ENCODE measurements at regions of chr7 and their contacts with region 1.

Region 1: GRCh38 chr7:1123715-1124114 is 35.8 kb downstream of the GPER1 start:
- DNase-seq: peak; percentile 93 to 97 (median 96)
- ATAC-seq: peak; percentile 96 to 97
- H3K4me3 ChIP-seq: peak overlapping the region; percentile 6
- H3K27ac ChIP-seq: peak overlapping the region; percentile 37
- H3K4me1 ChIP-seq: no peaks in the 10 kb centered on the region
- H3K27me3 ChIP-seq: no peaks in the 10 kb centered on the region

Region 2: GRCh38 chr7:1086588-1087464 is 36.9 kb before region 1 on chr7:
- intact Hi-C with region 1: loop called in 1 of 4 experiments (anchors 2 kb)
- DNase-seq: peak; percentile 76 to 90 (median 90)
- ATAC-seq: peak; percentile 68 to 77
- H3K4me3 ChIP-seq: peak overlapping the region; percentile 21
- H3K27ac ChIP-seq: no peak overlapping the region
- H3K4me1 ChIP-seq: no peaks in the 10 kb centered on the region
- H3K27me3 ChIP-seq: no peaks in the 10 kb centered on the region

Region 3: DNA sequence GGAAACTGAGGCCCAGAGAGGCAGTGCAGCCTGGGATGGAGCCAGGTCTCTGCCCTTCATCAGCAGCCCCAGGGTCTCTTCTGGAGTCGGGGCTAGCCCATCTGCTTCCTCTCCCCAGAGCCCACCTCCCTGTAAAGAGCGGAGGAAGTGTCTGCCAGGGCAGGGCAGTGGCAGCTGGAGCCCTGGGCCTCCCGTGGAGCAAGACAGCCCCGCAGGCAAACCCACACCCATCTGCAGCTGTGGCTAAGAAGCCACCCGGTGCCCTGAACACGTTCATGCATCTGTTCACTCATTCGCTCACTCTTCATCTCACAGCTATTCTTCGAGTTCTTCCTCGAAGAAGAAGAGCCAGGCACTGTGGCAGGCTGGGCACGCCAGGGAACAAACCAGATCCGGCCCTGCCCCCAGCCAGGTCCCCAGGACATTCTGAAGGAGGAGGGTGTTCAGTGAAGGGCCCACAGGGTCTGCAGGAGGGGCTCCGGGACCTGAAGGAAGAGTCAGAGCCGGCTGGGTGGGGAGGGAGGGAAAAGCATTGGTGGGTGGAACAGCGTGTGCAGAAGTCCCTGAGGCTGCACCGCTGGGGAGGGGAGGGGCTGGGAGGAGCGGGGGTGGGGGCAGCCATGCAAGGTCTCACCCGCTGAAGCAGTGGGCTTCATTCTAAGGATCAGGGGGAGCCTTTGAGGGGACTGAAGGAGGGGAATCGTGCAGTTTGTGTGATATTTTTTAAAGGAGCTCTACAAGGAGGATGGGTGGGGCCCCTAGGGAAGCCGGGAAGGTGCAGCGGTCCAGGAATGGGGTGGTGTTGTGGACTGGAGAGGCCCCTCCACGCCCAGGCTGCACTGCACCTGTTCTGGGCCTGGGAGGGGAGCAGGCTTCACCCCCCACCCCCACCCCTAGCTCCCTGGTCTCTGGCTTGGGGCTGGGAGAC is 208.1 kb after region 1 on chr7:
- intact Hi-C with region 1: no loop called
- DNase-seq: no peak
- ATAC-seq: no peak
- H3K4me3 ChIP-seq: no peak overlapping the region
- H3K27ac ChIP-seq: no peak overlapping the region
- H3K4me1 ChIP-seq: no peaks in the 10 kb centered on the region
- H3K27me3 ChIP-seq: no peaks in the 10 kb centered on the region